OCI-LY7 (cell line): ENCODE measurements at regions of chr7 and their contacts with region 1.

Region 1: GRCh38 chr7:101815835-101816493 is 1.5 kb upstream of the CUX1 start:
- DNase-seq: peak; percentile 90
- H3K4me3 ChIP-seq: peak overlapping the region; percentile 70
- H3K27ac ChIP-seq: peak overlapping the region; percentile 48
- H3K4me1 ChIP-seq: peaks cover 51% of the 10 kb centered on the region
- CTCF ChIP-seq: no peak

Region 2: DNA sequence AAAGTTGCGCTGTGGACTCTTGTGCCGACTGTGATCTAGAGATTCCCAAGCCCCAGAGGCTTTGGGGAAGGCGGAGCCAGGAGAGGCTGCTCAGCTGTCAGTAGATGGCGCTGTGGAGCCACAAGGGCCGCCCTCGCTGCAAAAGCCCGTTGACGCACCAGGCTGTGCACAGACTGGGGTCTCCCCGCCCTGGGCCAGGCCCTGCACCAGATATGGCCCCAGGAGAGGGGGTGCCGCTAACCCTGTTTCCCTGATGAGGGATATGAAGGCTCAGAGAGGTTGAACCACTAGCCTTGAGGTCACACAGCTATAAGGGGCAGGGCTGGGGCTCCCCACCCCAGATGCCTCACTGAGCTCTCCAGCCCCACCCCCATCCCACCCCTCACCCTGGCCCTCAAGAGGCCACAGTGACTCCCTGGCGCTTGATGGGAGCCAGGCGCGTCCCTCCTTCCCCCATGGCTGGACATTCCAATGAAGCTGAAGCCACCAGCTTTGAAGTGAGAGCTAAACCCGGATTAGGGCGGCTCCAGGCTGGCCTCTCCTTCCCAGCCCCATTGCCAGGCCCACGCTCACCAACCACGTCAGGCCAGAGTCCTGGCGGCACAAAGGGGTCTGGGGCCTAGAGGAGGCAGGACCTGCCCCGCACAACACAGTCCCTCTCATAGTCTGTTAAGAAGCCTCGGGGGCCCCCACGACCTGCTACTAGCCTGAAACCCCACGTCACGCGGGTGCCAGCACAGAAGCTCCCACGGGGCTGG is 213.3 kb before region 1 on chr7:
- CTCF ChIA-PET with region 1: interaction called, 3 read pairs
- POLR2A ChIA-PET with region 1: no interaction called
- intact Hi-C with region 1: loop called (anchors 1 kb)
- DNase-seq: peak; percentile 85
- H3K4me3 ChIP-seq: no peak overlapping the region
- H3K27ac ChIP-seq: no peak overlapping the region
- H3K4me1 ChIP-seq: peaks cover 10% of the 10 kb centered on the region
- CTCF ChIP-seq: peak; percentile 98

Region 3: GRCh38 chr7:101700168-101700805 is 115.7 kb before region 1 on chr7:
- CTCF ChIA-PET with region 1: no interaction called
- POLR2A ChIA-PET with region 1: no interaction called
- intact Hi-C with region 1: no loop called
- DNase-seq: no peak
- H3K4me3 ChIP-seq: no peak overlapping the region
- H3K27ac ChIP-seq: no peak overlapping the region
- H3K4me1 ChIP-seq: peaks cover 3% of the 10 kb centered on the region
- CTCF ChIP-seq: no peak

Region 4: GRCh38 chr7:101743241-101743994 is 72.5 kb before region 1 on chr7:
- CTCF ChIA-PET with region 1: no interaction called
- POLR2A ChIA-PET with region 1: interaction called, 7 read pairs
- intact Hi-C with region 1: loop called (anchors 1 kb)
- DNase-seq: peak; percentile 84
- H3K4me3 ChIP-seq: peak overlapping the region; percentile 76
- H3K27ac ChIP-seq: peak overlapping the region; percentile 93
- H3K4me1 ChIP-seq: peaks cover 80% of the 10 kb centered on the region
- CTCF ChIP-seq: peak; percentile 83

Region 5: GRCh38 chr7:101856473-101857357 is 40.8 kb after region 1 on chr7:
- CTCF ChIA-PET with region 1: interaction called, 3 read pairs
- POLR2A ChIA-PET with region 1: interaction called, 141 read pairs
- intact Hi-C with region 1: loop called (anchors 1 kb)
- DNase-seq: peak; percentile 92
- H3K4me3 ChIP-seq: peak overlapping the region; percentile 74
- H3K27ac ChIP-seq: peak overlapping the region; percentile 97
- H3K4me1 ChIP-seq: peaks cover 97% of the 10 kb centered on the region
- CTCF ChIP-seq: peak; percentile 73

Region 6: DNA sequence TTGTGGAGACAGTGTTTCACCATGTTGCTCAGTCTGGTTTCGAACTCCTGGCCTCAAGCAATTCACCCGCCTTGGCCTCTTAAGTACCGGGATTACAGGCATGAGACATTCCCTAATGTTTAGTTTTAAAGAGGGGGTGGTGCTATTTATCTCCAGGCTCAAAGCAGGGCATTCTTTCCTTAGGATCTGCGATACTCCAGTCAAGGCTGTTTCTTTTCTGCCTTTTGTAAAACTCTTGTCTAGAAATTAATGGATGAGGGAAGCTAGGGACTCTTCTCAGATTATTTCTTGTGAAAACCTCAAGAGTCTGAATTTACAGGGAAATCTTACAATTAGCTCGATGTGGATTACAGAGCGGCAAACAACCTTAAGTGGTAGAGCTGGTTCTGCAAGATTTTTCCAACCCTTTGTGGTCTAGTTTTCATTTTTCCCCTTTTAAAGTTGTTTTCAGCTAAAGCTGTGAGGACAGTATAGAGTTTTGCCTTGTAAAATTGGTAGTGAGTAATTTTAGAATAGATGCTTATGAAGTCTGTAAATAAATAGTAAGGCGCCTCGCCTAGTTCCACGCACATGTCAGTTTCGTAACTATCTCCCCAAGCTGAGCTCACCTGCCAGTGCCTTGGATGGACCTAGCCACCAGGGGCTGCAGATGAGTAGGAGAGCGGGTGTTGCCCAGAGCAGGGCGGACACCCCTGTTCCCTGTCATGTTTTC is 54.5 kb after region 1 on chr7:
- CTCF ChIA-PET with region 1: no interaction called
- POLR2A ChIA-PET with region 1: interaction called, 56 read pairs
- intact Hi-C with region 1: no loop called
- DNase-seq: peak; percentile 90
- H3K4me3 ChIP-seq: peak overlapping the region; percentile 57
- H3K27ac ChIP-seq: peak overlapping the region; percentile 97
- H3K4me1 ChIP-seq: peaks cover 100% of the 10 kb centered on the region
- CTCF ChIP-seq: peak; percentile 78

Region 7: GRCh38 chr7:101960985-101961708 is 145.2 kb after region 1 on chr7:
- CTCF ChIA-PET with region 1: no interaction called
- POLR2A ChIA-PET with region 1: no interaction called
- intact Hi-C with region 1: no loop called
- DNase-seq: no peak
- H3K4me3 ChIP-seq: no peak overlapping the region
- H3K27ac ChIP-seq: no peak overlapping the region
- H3K4me1 ChIP-seq: peaks cover 31% of the 10 kb centered on the region
- CTCF ChIP-seq: no peak

Region 8: DNA sequence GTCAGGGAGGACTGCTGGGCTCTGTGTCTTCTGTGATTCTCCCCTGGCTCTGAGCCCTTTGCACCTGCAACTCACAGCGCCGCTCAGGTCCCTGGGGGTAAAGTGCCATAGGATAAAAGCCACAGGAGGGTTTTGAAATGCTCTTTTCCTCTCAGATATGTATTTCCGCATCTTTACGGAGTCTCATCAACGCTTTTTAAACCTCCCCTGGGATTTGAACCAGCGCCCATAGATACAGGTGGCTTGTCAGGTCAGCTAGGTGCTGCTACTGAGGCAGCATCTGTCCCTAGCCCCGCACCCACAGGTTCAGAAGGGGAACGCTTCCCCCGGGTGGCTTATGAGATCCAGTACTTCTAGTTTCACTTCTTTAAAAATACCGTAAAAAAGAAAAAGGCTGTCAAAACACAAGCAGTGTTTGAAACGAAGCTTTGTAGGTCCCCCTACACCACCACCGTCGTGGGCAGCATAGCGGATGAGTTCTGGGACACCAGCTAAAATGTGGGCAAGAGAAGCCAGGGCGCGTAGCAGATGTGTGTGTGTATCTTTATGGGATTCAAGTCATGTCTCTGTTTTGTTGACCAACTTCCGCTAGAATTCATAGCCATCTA is 175.0 kb after region 1 on chr7:
- CTCF ChIA-PET with region 1: no interaction called
- POLR2A ChIA-PET with region 1: interaction called, 4 read pairs
- intact Hi-C with region 1: loop called (anchors 2 kb)
- DNase-seq: peak; percentile 100
- H3K4me3 ChIP-seq: peak overlapping the region; percentile 58
- H3K27ac ChIP-seq: peak overlapping the region; percentile 97
- H3K4me1 ChIP-seq: peaks cover 97% of the 10 kb centered on the region
- CTCF ChIP-seq: peak; percentile 56; the same call in 1 of the 2 replicates

Region 9: DNA sequence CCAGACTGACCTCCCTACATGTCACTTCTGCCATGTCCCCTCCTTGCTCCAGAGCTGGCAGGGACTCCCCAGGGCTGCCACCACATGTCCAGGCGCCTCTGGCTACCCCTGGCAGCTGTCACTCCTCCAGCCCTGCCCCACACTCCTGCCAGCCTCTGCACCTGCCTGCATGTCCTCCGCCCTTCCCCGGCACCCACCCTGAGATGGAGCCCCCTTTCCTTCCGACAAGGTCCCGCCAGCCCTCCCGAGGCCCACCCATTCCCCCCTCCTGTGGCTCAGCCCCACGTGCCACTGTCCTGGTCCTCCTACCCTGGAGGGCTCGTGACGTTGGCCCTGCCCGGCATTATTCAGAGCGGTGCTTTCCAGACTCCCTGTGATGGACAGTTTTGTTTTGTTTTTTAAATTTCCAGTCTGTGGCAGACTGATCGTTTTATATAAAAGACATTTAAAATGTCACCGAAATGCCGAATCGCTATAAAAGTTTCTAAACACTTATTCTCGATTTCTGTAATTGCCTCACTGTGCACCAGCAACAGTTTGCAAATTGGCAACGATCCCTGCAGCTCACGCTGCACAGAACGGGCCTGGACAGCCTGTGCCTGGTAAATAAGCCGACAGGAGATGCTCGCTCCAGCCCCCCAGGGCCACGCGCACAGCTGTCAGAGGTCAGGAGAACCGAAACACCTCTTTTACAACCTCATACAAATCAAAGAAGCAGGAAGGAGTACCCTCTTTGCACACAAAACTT is 359.6 kb after region 1 on chr7:
- CTCF ChIA-PET with region 1: no interaction called
- POLR2A ChIA-PET with region 1: no interaction called
- intact Hi-C with region 1: no loop called
- DNase-seq: no peak
- H3K4me3 ChIP-seq: no peak overlapping the region
- H3K27ac ChIP-seq: no peak overlapping the region
- H3K4me1 ChIP-seq: no peaks in the 10 kb centered on the region
- CTCF ChIP-seq: no peak

Region 10: DNA sequence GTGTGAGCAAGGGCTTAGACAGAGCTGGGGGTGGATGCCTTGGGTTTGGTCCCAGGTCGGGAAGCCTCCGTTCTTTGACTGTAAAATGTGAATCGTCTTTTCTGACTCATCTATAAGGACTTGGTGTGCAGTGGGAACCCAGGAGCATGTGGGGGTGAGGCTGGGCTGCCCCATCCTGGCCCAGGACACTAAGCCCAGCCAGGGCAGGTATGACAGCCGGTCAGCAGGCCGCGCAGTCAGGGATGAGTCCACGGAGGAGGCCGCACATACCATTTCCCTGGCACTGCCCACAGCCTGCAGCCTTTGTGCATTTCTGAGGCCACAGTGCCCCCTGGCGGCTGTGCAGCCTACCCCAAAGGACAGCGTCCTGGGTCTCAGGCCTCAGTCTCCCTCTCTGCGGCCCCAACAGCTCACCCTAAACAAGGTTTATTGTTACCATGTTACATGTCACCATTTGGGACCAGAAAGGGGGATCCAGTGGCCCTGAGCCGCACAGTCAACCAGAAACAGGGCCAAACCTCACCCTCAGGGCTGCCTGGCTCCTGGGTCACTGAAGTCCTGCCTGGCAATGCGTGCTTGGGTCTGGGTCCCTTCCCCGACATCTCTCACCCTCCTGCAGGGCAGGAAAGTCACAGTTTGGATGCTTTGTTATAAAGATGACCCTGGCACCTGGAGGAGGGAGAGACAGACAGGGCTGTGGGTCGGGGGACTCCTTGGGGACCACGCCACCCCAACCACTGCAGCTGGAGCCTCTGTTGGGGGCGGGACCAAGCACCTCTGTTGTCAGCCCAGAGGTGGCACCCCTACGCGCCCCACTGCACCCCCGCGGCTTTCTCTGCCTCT is 456.3 kb after region 1 on chr7:
- CTCF ChIA-PET with region 1: no interaction called
- POLR2A ChIA-PET with region 1: no interaction called
- intact Hi-C with region 1: loop called (anchors 5 kb)
- DNase-seq: peak; percentile 80
- H3K4me3 ChIP-seq: no peak overlapping the region
- H3K27ac ChIP-seq: no peak overlapping the region
- H3K4me1 ChIP-seq: peaks cover 17% of the 10 kb centered on the region
- CTCF ChIP-seq: peak; percentile 97